Aorta (tissue), 5 donors: ENCODE measurements at regions of chr15 and their contacts with region 1.

Region 1: GRCh38 chr15:25863111-25863967 is at the start of gene ATP10A:
- DNase-seq: peak; percentile 68 to 88
- ATAC-seq: peak; percentile 24
- H3K4me3 ChIP-seq: peak within 1 kb of the TSS; percentile 64 to 96
- H3K27ac ChIP-seq: peak within 1 kb of the TSS; percentile 77 to 82
- H3K4me1 ChIP-seq: no peaks in the 10 kb centered on the region
- H3K27me3 ChIP-seq: no peaks in the 10 kb centered on the region
- total RNA-seq, gene ATP10A: 19.9 to 55.0 TPM

Region 2: GRCh38 chr15:24924621-24925020 is 938.7 kb before region 1 on chr15:
- intact Hi-C with region 1: no loop called
- DNase-seq: no peak
- ATAC-seq: no peak
- H3K4me3 ChIP-seq: no peak overlapping the region
- H3K27ac ChIP-seq: peak overlapping the region in 1 of 2 donors; percentile 25
- H3K4me1 ChIP-seq: no peaks in the 10 kb centered on the region
- H3K27me3 ChIP-seq: no peaks in the 10 kb centered on the region

Region 3: GRCh38 chr15:25670025-25670554 is 193.2 kb before region 1 on chr15:
- intact Hi-C with region 1: loop called in 1 of 2 experiments (anchors 5 kb)
- DNase-seq: peak; percentile 85 to 91
- ATAC-seq: peak; percentile 85
- H3K4me3 ChIP-seq: no peak overlapping the region
- H3K27ac ChIP-seq: peak overlapping the region; percentile 29 to 73
- H3K4me1 ChIP-seq: peaks cover 3 to 5% of the 10 kb centered on the region in 2 donors
- H3K27me3 ChIP-seq: no peaks in the 10 kb centered on the region

Region 4: DNA sequence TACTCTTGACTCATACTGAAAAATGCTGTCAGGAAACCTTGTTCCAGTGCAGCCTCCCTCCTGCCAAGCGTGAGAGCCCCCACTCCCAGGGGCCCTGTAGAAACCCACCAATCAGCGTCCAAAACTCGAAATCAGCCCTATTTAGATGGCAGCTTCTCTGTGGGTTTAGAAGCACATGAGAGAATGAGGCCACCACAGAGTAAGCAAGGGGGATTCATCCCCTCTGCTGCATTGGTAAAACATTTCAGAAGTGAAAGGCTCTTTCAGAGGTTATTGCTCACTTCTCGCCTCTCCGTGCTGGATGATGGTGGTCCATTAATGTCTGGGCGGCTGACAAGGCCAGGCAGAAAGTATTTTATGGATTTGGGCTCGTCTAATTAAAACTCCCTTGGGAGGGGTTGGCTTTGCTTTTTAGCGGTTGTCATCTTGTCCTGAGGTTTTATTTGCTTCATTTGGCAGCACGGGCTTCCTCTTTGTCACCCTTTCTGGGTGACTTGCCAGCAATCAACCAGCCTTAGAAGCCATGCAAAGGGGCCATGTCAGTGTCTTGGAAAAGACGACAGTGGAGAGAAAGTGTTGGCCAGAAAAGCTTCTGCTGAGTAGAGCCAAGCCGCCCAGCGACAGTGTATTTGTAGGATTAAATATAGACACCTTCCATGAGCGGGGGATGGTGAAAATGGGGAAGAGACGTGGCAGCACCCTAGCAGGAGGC is 145.7 kb before region 1 on chr15:
- intact Hi-C with region 1: loop called (anchors 5 to 10 kb)
- DNase-seq: peak; percentile 59 to 78
- ATAC-seq: peak; percentile 36
- H3K4me3 ChIP-seq: no peak overlapping the region
- H3K27ac ChIP-seq: peak overlapping the region; percentile 14 to 75
- H3K4me1 ChIP-seq: peaks cover 0 to 4% of the 10 kb centered on the region in 2 donors
- H3K27me3 ChIP-seq: no peaks in the 10 kb centered on the region

Region 5: DNA sequence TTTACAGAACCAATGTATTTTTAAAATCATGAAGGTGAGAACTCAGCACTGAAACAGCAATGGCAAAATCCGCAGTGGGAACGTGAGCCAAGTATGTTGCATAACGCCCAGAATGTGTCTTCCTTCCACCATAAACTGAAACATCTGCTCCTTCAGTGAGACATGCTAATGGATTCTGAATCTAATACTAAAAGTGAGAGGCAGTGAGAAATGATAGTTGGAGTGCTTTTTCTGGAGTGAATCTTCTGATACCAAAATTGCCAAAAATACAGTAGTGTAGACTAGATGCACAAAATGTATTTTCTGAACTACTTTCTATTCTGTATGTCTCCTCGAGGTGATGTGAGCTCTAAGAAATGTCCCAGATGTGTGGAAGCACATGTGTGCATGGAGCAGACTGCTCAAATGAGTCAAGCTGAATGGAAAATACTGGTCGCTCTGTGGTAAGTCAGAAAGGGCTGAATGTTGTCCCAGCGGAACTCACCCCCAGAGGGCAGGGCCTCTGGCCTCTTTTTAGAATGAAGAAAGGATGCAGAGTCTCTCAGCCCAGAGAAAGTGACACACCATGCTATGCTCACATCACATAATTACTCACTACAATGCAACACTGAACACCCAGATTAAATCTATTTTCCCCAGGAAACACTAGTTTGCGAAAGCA is 73.2 kb before region 1 on chr15:
- intact Hi-C with region 1: loop called (anchors 2 to 5 kb)
- DNase-seq: peak in 1 of 2 donors; percentile 80
- ATAC-seq: peak; percentile 68
- H3K4me3 ChIP-seq: no peak overlapping the region
- H3K27ac ChIP-seq: peak overlapping the region in 1 of 2 donors; percentile 11
- H3K4me1 ChIP-seq: peaks cover 4 to 8% of the 10 kb centered on the region in 2 donors
- H3K27me3 ChIP-seq: no peaks in the 10 kb centered on the region

Region 6: DNA sequence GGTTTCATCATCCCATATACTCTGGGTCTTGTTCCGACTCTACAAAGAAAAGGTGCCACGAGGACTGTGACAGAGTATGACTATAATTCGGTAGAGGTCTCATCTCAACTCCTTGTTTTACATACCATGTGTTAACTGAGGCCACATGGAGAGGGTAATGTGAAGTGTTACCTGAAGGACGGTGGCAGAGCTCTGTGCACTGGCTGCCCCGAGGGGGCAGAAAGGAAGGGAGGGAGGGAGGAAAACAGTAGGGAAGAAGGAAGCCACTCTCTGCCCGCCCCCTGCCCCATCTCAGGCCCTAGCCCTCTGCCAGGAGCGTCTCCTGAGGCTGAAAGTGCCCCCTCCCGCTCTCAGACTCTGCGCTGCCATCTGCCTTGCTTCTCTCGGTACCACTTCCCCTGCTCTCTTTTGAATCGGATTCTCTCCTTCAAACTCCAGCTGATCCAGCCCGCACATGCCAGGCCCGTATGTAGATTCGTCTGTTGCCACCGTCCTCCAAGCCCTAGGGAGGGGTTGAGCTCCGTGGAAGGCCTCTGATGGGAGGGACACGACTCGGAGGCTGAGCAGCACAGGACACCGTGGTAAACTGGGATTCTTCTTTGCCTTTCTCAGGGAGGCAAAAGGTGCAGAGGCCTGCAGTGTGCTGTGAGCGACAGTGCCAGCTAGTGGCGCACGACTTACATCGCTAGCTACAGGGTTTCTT is 70.3 kb after region 1 on chr15:
- intact Hi-C with region 1: loop called (anchors 5 kb)
- DNase-seq: peak; percentile 88 to 91
- ATAC-seq: peak; percentile 92
- H3K4me3 ChIP-seq: peak overlapping the region in 1 of 2 donors; percentile 16
- H3K27ac ChIP-seq: no peak overlapping the region
- H3K4me1 ChIP-seq: no peaks in the 10 kb centered on the region
- H3K27me3 ChIP-seq: no peaks in the 10 kb centered on the region